HepG2 (cell line): ENCODE measurements at regions of chr20 and their contacts with region 1.

Region 1: GRCh38 chr20:23350196-23350903 is at the start of gene NXT1:
- DNase-seq: peak; percentile 100
- ATAC-seq: peak; percentile 92
- H3K4me3 ChIP-seq: peak within 1 kb of the TSS; percentile 80 to 91 (median 90)
- H3K27ac ChIP-seq: peak within 1 kb of the TSS; percentile 91
- H3K4me1 ChIP-seq: peaks cover 45% of the 10 kb centered on the region
- H3K27me3 ChIP-seq: no peaks in the 10 kb centered on the region; a peak in 1 of 5 replicates
- CTCF ChIP-seq: peak; percentile 45
- EP300 ChIP-seq: peak in 1 of 2 experiments; percentile 26; a peak in 1 of 4 replicates
- POLR2A ChIP-seq: peak; percentile 82 to 93
- RAD21 ChIP-seq: peak; percentile 46; the same call in 1 of the 2 replicates
- total RNA-seq, gene NXT1: 65.9 and 69.7 TPM in 2 replicates

Region 2: GRCh38 chr20:22523499-22524392 is 826.6 kb before region 1 on chr20:
- CTCF ChIA-PET with region 1: no interaction called
- POLR2A ChIA-PET with region 1: interaction called, 12 read pairs
- in situ Hi-C with region 1: no loop called
- intact Hi-C with region 1: no loop called
- DNase-seq: peak; percentile 99
- ATAC-seq: peak; percentile 81
- H3K4me3 ChIP-seq: peak overlapping the region; percentile 39 to 69 (median 50); a peak in 5 of 6 replicates
- H3K27ac ChIP-seq: peak overlapping the region; percentile 89
- H3K4me1 ChIP-seq: peaks cover 67% of the 10 kb centered on the region
- H3K27me3 ChIP-seq: no peaks in the 10 kb centered on the region
- CTCF ChIP-seq: no peak
- EP300 ChIP-seq: peak; percentile 46 to 90
- POLR2A ChIP-seq: peak; percentile 74 to 85
- RAD21 ChIP-seq: peak; percentile 72

Region 3: GRCh38 chr20:22861229-22861980 is 488.9 kb before region 1 on chr20:
- CTCF ChIA-PET with region 1: no interaction called
- POLR2A ChIA-PET with region 1: no interaction called
- in situ Hi-C with region 1: no loop called
- intact Hi-C with region 1: loop called (anchors 10 kb)
- DNase-seq: no peak
- ATAC-seq: no peak
- H3K4me3 ChIP-seq: no peak overlapping the region
- H3K27ac ChIP-seq: no peak overlapping the region
- H3K4me1 ChIP-seq: no peaks in the 10 kb centered on the region
- H3K27me3 ChIP-seq: no peaks in the 10 kb centered on the region
- CTCF ChIP-seq: no peak
- EP300 ChIP-seq: no peak
- POLR2A ChIP-seq: no peak
- RAD21 ChIP-seq: no peak

Region 4: GRCh38 chr20:23326769-23327168 is 23.6 kb before region 1 on chr20:
- CTCF ChIA-PET with region 1: no interaction called
- POLR2A ChIA-PET with region 1: no interaction called
- in situ Hi-C with region 1: no loop called
- intact Hi-C with region 1: no loop called
- DNase-seq: no peak
- ATAC-seq: peak; percentile 54
- H3K4me3 ChIP-seq: no peak overlapping the region
- H3K27ac ChIP-seq: no peak overlapping the region
- H3K4me1 ChIP-seq: no peaks in the 10 kb centered on the region
- H3K27me3 ChIP-seq: no peaks in the 10 kb centered on the region
- CTCF ChIP-seq: no peak
- EP300 ChIP-seq: no peak
- POLR2A ChIP-seq: no peak
- RAD21 ChIP-seq: no peak

Region 5: GRCh38 chr20:23386304-23387117 is 36.2 kb after region 1 on chr20:
- CTCF ChIA-PET with region 1: no interaction called
- POLR2A ChIA-PET with region 1: interaction called, 12 read pairs
- in situ Hi-C with region 1: no loop called
- intact Hi-C with region 1: no loop called
- DNase-seq: peak; percentile 74
- ATAC-seq: peak; percentile 79
- H3K4me3 ChIP-seq: peak overlapping the region in 1 of 3 experiments; percentile 32; a peak in 1 of 6 replicates
- H3K27ac ChIP-seq: peak overlapping the region; percentile 10
- H3K4me1 ChIP-seq: peaks cover 26% of the 10 kb centered on the region
- H3K27me3 ChIP-seq: no peaks in the 10 kb centered on the region
- CTCF ChIP-seq: 0 out of 2 replicates have a peak, but pooled peaks have one; percentile 4
- EP300 ChIP-seq: peak in 1 of 2 experiments; percentile 72; a peak in 2 of 4 replicates
- POLR2A ChIP-seq: no peak
- RAD21 ChIP-seq: no peak

Region 6: GRCh38 chr20:23435626-23436539 is 85.5 kb after region 1 on chr20:
- CTCF ChIA-PET with region 1: no interaction called
- POLR2A ChIA-PET with region 1: interaction called, 29 read pairs
- in situ Hi-C with region 1: no loop called
- intact Hi-C with region 1: no loop called
- DNase-seq: peak; percentile 86
- ATAC-seq: peak; percentile 93
- H3K4me3 ChIP-seq: peak overlapping the region; percentile 38 to 67 (median 47)
- H3K27ac ChIP-seq: peak overlapping the region; percentile 50
- H3K4me1 ChIP-seq: peaks cover 41% of the 10 kb centered on the region
- H3K27me3 ChIP-seq: no peaks in the 10 kb centered on the region; a peak in 1 of 5 replicates
- CTCF ChIP-seq: no peak; the same call in 1 of the 2 replicates
- EP300 ChIP-seq: no peak
- POLR2A ChIP-seq: 0 out of 4 replicates have a peak, but pooled peaks of 1 of the 2 experiments have one; percentile 43
- RAD21 ChIP-seq: no peak

Region 7: DNA sequence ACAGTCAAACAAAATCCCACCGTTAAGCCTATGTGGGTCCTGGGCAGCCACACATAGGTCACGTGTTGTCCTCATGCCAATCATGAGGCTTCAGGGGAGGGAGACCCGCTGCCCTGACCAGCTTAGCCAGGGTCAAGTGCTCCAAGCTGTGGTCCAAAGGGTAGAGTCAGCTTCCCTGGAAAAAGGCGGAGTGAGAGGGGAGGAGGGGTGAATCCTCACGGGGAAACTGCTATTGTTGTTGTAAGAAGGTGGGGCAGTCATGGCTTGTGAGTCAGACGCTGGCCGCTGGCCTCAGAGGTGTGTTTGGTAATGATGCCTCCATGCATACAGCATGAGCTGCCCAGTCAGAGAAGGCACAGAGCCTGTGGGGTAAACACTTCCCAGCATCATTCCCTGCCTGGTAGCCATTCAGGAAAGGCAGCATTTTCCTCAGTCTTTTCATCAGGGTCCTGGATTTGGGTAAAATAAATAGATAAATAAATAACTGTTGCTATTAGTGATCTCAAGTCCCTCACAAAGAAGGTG is 278.7 kb after region 1 on chr20:
- CTCF ChIA-PET with region 1: no interaction called
- POLR2A ChIA-PET with region 1: interaction called, 12 read pairs
- in situ Hi-C with region 1: no loop called
- intact Hi-C with region 1: no loop called
- DNase-seq: peak; percentile 98
- ATAC-seq: peak; percentile 87
- H3K4me3 ChIP-seq: peak overlapping the region in 1 of 3 experiments; percentile 39; a peak in 1 of 6 replicates
- H3K27ac ChIP-seq: peak overlapping the region; percentile 70
- H3K4me1 ChIP-seq: peaks cover 80% of the 10 kb centered on the region
- H3K27me3 ChIP-seq: no peaks in the 10 kb centered on the region
- CTCF ChIP-seq: peak; percentile 31
- EP300 ChIP-seq: peak; percentile 76 to 80; a peak in 3 of 4 replicates
- POLR2A ChIP-seq: peak; percentile 40 to 50; a peak in 1 of 4 replicates
- RAD21 ChIP-seq: no peak; the same call in 1 of the 2 replicates